Posterior vena cava (tissue), 2 donors: ENCODE measurements at regions of chr11 and their contacts with region 1.

Region 1: DNA sequence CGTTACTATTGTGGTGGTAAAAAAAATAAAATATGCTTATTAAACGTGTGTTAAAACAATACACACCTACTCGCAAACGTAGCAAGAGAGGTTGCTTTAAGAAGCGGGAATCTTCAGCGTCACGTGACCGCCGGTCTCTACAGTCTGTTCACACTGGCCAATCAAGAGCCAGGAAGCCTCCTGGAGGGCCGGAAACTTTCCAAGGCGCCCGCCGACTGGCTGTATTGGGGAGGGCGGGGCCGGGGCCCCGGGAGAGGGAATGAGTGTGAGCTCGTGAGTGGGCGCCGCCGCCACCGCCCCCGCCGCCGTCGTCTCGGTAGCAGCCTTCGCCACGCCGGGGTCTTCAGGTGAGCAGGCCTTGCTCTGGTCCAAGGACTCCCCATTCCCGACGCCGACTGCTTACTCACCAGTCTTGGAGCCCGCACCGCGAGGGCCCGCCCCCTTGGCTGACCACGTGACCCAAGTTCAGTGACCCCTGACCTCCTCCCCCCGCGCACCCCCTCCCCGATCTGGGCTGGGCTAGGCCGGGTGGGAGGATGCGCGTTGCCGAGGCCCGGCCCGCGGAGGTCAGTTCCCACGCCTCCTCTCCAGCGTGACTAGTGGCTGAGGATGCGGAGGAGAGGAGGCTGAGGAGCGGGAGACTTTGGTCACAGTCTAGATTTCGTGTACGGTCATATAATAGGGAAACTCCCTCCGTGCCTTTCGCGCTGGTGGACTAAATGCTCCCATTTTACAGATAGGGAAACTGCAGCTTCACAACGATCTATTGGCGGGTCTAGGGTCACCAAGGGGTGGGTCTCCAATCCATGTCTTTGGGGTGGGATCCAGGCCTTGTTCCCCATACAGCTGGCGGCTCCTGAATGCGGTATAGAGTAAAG is at the start of gene TAF6L:
- DNase-seq: peak; percentile 99
- total RNA-seq, gene TAF6L: 11.3 to 12.9 TPM

Region 2: DNA sequence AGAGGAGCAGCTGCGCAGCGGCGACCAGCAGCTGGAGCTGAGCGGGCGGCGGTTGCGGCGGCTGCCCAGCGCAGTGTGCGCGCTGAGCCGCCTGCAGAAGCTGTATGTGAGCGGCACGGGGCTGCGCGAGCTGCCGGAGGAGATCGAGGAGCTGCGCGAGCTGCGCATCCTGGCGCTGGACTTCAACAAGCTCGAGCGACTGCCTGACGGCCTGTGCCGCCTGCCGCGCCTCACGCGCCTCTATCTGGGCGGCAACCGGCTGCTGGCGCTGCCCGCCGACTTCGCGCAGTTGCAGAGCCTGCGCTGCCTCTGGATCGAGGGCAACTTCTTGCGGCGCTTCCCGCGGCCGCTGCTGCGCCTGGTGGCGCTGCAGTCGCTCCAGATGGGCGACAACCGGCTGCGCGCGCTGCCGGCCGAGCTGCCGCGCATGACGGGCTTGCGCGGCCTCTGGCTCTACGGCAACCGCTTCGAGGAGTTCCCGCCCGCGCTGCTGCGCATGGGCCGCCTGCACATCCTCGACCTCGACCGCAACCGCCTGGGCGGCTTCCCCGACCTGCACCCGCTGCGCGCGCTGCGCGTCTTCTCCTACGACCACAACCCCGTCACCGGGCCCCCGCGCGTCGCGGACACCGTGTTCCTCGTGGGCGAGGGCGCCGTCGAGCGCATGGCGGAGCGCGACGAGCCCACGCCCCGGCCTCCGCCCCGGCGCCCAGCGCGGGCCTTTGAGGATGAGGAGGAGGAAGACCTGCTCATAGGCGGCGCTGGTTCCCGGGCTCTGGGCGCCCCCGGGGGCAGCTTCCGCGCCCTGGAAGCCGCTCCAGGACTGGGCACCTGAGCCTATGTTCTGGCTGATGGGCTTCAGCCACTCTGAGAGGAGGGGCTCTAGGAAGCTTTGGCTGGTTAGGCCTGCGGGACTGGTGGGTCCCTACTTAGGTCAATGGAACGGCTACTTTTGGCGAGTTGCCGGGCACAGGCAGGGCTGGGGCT is 1262.0 kb before region 1 on chr11:
- intact Hi-C with region 1: loop called in 1 of 2 experiments (anchors 10 kb)
- DNase-seq: no peak